ENCODE measurements at regions of chr11 and their contacts with region 1.

Region 1: GRCh38 chr11:95835768-95836488 is 45.6 kb downstream of the CEP57 start:
- ATAC-seq: peak; percentile 59 to 96 (median 89)
- H3K4me3 ChIP-seq: no peak overlapping the region
- H3K27ac ChIP-seq: no peak overlapping the region
- H3K4me1 ChIP-seq: no peaks in the 10 kb centered on the region

Region 2: GRCh38 chr11:95443386-95443785 is 392.5 kb before region 1 on chr11:
- in situ Hi-C with region 1: no loop called
- ATAC-seq: no peak
- H3K4me3 ChIP-seq: no peak overlapping the region
- H3K27ac ChIP-seq: no peak overlapping the region
- H3K4me1 ChIP-seq: no peaks in the 10 kb centered on the region

Region 3: DNA sequence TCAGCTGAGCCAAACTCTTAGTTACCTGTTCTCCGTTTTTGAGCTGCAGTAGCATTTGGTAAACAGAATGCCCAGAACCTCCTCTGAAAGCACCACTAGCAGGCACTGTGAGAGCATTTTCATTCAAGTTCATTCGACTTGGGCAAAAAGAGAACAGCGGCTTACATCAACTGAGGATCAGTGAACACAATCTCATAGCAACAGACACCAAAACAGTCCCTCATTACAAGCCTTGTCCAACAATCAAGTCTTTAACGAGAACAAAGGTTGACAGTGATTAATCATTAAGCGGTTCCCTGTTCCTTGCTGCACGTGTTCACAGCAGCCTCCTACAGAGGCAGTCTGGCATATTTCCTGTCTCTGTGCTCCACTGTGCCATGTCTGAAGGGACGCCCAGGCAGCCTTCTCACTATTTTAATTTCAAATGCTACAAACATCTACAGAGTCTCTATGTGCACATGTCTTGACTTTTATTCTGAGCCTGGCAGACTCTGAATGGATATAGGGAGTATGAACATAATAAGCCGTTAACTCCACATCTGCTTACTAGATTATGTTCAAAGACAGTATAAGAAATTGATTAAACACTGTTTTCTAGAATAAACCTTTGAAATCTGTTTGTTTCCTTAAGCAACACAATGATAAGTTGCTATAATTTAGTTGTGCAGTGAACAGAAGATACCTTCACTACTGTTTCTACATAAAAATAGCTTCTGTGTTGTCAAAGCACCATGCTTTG is 176.3 kb after region 1 on chr11:
- in situ Hi-C with region 1: loop called in 1 of 9 experiments (anchors 25 kb)
- ATAC-seq: peak; percentile 94 to 99 (median 96)
- H3K4me3 ChIP-seq: peak overlapping the region in 1 of 5 donors; percentile 14
- H3K27ac ChIP-seq: no peak overlapping the region
- H3K4me1 ChIP-seq: peaks cover 12 to 18% of the 10 kb centered on the region in 2 donors

Region 4: DNA sequence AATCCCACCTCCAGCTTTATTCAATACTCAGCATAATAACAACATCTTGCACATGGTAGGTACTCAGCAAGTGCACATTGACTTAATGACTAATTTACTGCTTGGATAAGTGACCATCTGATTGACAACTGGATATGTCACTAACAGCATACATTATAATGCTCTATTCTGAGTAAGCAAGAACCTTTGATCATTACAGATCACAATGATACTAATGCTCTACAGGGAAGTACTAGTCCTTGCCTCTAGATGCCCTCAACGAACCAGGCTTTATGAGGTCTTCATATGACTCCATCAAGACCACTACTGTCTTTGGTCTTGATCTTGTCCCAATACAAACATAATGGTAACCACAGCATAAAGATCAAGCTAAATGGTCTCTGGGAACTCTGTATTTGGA is 255.5 kb after region 1 on chr11:
- in situ Hi-C with region 1: no loop called
- ATAC-seq: peak in 1 of 8 experiments; percentile 49
- H3K4me3 ChIP-seq: no peak overlapping the region
- H3K27ac ChIP-seq: no peak overlapping the region
- H3K4me1 ChIP-seq: peaks cover 12 to 13% of the 10 kb centered on the region in 2 donors

Region 5: DNA sequence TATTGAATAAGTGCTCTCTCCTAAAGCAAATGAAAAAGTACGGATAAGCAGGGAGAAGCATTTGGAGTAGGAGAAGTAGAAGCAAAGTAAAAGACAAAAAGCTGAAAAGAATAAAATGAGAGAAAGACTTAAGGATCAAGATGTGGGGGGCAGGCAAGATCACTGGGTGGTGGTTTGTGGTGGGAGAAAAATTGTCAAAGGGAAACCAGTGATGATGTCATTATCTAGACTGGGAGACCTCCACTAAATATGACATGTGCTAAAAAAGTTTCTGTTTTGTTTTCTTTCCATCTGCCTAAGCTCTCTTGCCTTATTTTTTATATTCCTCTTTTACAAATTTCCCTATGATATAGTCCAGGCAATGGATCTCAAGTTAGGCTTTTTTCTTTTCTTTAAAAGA is 521.9 kb after region 1 on chr11:
- in situ Hi-C with region 1: loop called in 1 of 9 experiments (anchors 25 kb)
- ATAC-seq: no peak
- H3K4me3 ChIP-seq: no peak overlapping the region
- H3K27ac ChIP-seq: no peak overlapping the region
- H3K4me1 ChIP-seq: no peaks in the 10 kb centered on the region

Region 6: GRCh38 chr11:96424693-96425092 is 588.8 kb after region 1 on chr11:
- in situ Hi-C with region 1: loop called in 2 of 9 experiments (anchors 25 kb)
- ATAC-seq: peak in 2 of 8 experiments; percentile 29 to 35
- H3K4me3 ChIP-seq: no peak overlapping the region
- H3K27ac ChIP-seq: no peak overlapping the region
- H3K4me1 ChIP-seq: peaks cover 3 to 18% of the 10 kb centered on the region in 2 donors